Aorta (tissue), 5 donors: ENCODE measurements at regions of chr6 and their contacts with region 1.

Region 1: DNA sequence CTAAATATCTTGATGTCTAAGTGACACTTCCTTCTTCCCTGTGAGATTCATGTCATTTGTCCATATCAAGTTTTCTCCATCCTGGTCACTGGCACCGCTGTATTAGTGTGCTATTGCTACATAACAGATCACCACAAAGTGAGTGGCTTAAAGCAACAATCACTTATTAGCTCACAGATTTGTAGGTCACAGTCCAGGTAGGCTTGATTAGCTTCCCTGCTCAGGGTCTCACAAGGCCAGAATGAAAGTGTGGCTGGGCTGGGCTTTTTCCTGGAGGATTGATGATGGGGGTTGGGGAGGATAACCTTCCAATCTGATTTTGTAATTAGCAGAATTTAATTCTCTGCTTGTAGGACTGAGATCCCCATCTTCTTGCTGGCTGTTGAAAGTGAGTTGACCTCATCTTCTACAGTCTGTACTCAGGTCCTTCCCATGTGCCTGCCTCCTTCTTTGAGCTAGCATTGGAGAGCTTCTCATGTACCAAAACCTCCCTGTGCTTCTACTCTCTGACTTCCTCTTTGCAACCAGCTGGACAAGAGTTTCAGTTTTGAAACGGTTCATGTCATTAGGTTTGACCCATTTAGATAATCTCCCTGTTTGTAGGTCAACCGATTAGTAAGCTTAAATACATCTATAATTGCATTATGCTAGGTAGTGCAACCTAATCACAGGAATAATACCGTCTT is 152.4 kb upstream of the MAN1A1 start:
- DNase-seq: no peak
- ATAC-seq: no peak
- H3K4me3 ChIP-seq: no peak overlapping the region
- H3K27ac ChIP-seq: no peak overlapping the region
- H3K4me1 ChIP-seq: no peaks in the 10 kb centered on the region
- H3K27me3 ChIP-seq: no peaks in the 10 kb centered on the region

Region 2: GRCh38 chr6:119361209-119361608 is 140.7 kb before region 1 on chr6:
- intact Hi-C with region 1: no loop called
- DNase-seq: no peak
- ATAC-seq: no peak
- H3K4me3 ChIP-seq: no peak overlapping the region
- H3K27ac ChIP-seq: no peak overlapping the region
- H3K4me1 ChIP-seq: no peaks in the 10 kb centered on the region
- H3K27me3 ChIP-seq: no peaks in the 10 kb centered on the region

Region 3: GRCh38 chr6:119463081-119463626 is 38.8 kb before region 1 on chr6:
- intact Hi-C with region 1: no loop called
- DNase-seq: no peak
- ATAC-seq: no peak
- H3K4me3 ChIP-seq: no peak overlapping the region
- H3K27ac ChIP-seq: no peak overlapping the region
- H3K4me1 ChIP-seq: no peaks in the 10 kb centered on the region
- H3K27me3 ChIP-seq: no peaks in the 10 kb centered on the region

Region 4: DNA sequence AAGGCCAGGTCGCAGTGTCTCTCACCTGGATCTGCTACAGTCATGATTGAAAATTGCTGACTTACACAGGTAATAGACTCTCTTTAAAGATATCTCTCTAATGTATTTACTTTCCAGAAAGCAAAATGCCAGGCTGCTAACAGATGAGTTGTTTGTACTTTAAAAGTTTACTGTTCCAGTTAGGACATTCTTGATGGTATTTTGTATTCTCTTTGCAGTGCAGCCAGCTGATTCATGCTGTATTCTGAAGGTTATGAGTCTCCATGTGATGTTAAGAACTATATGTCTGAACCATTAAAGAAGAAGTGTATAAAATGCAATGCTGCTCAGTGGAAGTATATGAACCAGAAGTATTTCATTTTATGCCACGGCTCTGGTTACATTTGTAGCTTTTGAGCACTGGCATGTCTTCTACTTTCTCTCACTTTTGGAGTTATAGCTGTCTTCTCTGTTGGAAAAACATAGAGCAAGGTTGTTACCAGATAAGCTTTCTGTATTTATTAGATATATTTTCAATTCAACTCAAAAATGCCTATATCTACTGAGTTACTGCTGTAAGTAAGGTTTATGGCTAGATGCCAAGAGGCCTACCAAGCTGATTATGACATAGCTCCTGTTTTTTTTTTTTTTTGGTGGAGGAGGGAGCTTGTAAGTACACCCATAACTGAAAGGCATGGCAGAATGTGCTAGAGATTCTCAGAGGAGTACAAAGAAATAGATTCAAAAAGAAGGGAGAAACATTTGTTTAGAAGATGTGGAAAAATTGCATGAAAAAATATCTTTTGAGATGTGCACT is 21.9 kb before region 1 on chr6:
- intact Hi-C with region 1: loop called in 1 of 2 experiments (anchors 2 kb)
- DNase-seq: no peak
- ATAC-seq: no peak
- H3K4me3 ChIP-seq: no peak overlapping the region
- H3K27ac ChIP-seq: no peak overlapping the region
- H3K4me1 ChIP-seq: no peaks in the 10 kb centered on the region
- H3K27me3 ChIP-seq: no peaks in the 10 kb centered on the region

Region 5: DNA sequence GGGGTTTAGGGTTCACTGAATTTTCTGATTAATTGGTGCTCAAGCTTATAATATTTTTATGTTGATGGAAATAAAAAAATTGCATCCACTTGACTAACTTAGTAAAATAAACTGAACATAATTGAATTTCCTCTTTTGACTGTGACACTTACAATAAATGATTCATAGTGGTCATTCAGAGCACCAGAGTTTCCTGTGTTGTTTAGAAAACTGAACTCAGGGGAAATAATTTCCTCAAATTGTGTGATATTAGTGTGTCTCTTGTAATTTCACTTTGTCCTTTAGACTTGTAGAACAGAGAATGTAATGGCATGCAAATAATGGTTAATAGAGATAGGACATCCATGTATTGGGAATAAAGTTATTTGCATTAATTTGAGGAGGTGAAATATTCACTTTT is 167.3 kb after region 1 on chr6:
- intact Hi-C with region 1: no loop called
- DNase-seq: no peak
- ATAC-seq: no peak
- H3K4me3 ChIP-seq: no peak overlapping the region
- H3K27ac ChIP-seq: no peak overlapping the region
- H3K4me1 ChIP-seq: no peaks in the 10 kb centered on the region
- H3K27me3 ChIP-seq: no peaks in the 10 kb centered on the region